Head of caudate nucleus (tissue), 42 donors: ENCODE measurements at regions of chr12 and their contacts with region 1.

Region 1: DNA sequence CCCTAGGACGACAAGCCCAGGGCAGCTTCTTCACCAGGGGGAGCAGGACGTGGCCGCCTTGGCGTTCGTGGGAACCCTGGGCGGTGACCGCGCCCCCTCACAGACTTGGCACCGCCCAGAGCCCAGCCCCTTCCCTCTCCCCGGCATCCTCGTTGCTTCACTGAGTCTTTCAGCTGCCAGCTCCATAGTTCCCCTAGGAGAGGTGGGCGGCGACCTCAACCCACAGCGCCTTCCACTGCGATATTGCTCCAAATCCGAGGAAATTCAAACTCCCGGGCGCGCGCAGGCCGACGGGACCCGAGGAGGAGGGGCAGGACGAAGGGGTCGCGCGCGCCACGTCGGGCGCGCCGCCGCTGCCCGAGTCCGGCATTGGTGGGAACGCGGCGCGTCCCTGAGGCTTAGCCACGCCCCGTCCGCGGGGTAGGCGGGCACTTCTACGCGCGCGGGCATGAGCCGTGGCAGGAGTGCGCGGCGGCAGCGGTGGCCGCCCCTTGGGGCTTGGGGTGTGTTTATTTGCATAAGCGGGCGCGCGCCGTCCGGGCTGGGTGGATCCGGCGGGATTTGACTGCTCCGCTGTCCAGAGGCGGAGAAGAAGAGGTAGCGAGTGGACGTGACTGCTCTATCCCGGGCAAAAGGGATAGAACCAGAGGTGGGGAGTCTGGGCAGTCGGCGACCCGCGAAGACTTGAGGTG is at the starts of genes APAF1 and IKBIP:
- DNase-seq: peak; percentile 91 to 99 (median 97)

Region 2: GRCh38 chr12:98593351-98594049 is 51.4 kb before region 1 on chr12 and contains the start of gene SLC25A3:
- intact Hi-C with region 1: loop called (anchors 2 kb)
- DNase-seq: peak; percentile 90 to 98 (median 97)

Region 3: GRCh38 chr12:98606357-98606988 is 38.4 kb before region 1 on chr12:
- intact Hi-C with region 1: loop called (anchors 5 kb)
- DNase-seq: no peak

Region 4: DNA sequence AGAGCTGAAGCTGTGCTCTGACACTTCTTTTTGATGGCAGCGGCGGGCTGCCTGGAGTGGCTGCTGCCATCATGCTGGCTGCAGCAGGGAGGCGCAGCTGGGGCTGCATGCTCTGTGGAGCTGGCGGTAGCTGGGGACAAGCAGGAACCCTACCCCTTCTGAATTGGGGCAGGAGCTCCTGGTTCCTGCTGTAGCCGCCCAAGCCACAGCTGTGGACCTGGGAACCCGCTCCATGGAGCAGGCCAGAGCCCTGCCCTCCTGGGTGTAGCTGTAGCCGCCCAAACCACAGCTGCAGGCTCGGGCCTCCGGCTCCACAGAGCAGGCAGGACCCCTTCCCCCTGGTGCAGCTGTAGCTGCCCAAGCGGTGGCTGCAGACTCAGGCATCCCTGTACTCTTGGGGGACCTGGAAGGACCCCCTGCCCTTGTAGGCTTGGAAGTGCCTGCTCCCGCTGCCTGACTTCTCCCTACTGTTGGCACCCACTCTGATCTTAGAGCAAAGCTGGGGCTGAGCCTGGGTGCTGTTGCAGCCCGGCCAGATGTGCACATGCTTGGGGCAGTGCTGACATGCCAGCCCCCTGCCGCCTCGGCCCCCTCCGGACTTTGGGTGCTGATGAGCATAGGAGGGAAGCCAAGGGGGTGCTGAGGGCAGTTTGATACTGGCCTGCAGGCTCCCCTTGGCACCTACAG is 33.5 kb after region 1 on chr12:
- intact Hi-C with region 1: no loop called
- DNase-seq: no peak

Region 5: GRCh38 chr12:98725476-98726247 is 80.8 kb after region 1 on chr12:
- intact Hi-C with region 1: no loop called
- DNase-seq: peak; percentile 34 to 91 (median 78)